Activated CD4-positive, alpha-beta T cell treated with anti-CD3 and anti-CD28 coated beads for 36 hours (primary cell): ENCODE measurements at regions of chr22 and their contacts with region 1.

Region 1: GRCh38 chr22:26502688-26503561 is 9.3 kb downstream of the TFIP11 start:
- DNase-seq: peak; percentile 72
- ATAC-seq: peak; percentile 93
- H3K4me3 Mint-ChIP-seq: no peak overlapping the region
- H3K27ac Mint-ChIP-seq: peak overlapping the region; percentile 84
- H3K4me1 Mint-ChIP-seq: peaks cover 18% of the 10 kb centered on the region
- H3K27me3 Mint-ChIP-seq: no peaks in the 10 kb centered on the region

Region 2: DNA sequence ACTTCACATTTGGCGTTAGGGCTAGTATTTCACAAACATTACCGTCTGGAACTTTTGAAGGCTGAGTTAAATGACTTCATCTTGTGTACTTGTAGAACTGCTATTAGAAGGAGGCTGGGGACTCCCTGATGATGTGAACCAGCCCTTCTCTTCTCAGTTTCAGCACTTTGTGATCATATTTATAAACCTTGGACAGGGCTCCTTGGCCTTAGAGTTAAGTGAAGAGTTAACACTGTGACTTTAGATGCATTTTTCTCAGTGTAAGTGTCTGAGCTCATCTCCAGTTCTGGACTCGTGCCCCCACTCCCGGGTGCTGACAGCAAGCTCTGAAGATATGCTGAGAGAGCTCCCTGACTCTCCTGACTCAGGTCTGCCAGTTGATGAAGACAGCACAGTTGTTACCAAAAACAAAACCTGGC is 162.9 kb after region 1 on chr22:
- CTCF ChIA-PET with region 1: interaction called, 14 read pairs
- POLR2A ChIA-PET with region 1: no interaction called
- intact Hi-C with region 1: loop called in 1 of 2 experiments (anchors 1 kb)
- DNase-seq: no peak
- ATAC-seq: peak; percentile 23
- H3K4me3 Mint-ChIP-seq: no peak overlapping the region
- H3K27ac Mint-ChIP-seq: peak overlapping the region; percentile 71
- H3K4me1 Mint-ChIP-seq: peaks cover 42% of the 10 kb centered on the region
- H3K27me3 Mint-ChIP-seq: no peaks in the 10 kb centered on the region

Region 3: DNA sequence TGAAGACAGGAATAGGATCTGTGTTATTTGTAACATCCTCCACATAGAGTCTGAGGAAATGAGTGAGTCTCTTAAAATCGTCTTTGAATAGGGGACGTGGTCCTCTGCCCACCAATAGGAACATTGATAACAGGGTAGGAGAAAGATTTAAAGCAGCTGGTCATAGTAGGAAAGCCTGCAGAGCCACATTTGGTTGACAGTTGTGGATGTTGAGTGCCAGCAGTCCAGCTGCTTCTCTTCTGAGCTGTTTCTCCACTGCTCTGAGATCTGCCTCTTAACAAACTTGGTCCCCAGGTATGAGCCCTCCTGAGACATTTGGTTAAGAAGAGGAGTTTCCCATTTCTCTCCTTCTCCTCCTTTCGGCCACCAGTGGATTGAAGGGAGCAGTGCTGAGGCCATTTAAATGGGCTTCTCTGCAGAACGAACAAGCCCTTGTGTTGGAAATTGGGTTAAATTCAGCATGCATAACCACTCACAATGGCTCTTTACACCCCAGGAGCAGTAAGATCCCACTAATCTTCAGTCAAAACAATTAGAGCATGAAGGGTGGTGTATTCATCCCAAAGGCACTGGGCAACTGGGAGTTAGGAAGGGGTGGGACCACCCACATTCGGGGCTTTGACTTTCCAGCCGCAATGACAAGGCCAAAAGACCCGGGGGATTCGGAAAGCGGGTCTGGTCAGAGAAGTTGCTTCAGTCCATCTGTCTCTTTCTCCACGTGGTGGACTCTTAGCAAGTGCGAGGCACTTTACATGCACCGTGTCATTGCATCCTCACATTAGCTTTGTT is 186.8 kb after region 1 on chr22:
- CTCF ChIA-PET with region 1: no interaction called
- POLR2A ChIA-PET with region 1: no interaction called
- intact Hi-C with region 1: no loop called
- DNase-seq: no peak
- ATAC-seq: no peak
- H3K4me3 Mint-ChIP-seq: no peak overlapping the region
- H3K27ac Mint-ChIP-seq: no peak overlapping the region
- H3K4me1 Mint-ChIP-seq: peaks cover 38% of the 10 kb centered on the region
- H3K27me3 Mint-ChIP-seq: no peaks in the 10 kb centered on the region

Region 4: DNA sequence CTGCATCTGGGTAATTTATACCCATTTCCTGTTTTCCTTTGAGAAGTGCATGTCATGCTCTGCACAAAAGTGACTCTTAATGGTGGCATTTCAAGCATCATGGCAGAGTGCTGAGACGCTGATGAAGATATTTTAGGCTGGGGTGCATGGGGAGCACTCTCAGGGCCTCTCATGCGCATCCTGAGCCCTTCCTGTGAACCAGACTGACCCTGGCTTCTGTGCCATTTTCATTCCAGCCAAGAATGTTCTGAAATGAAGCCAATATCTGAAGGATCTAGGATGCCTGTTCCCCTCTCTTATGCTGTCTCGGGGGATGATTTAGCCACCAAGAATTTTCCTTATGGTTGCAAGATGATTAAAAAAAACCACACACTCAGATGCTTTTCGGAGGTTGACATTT is 216.0 kb after region 1 on chr22:
- CTCF ChIA-PET with region 1: no interaction called
- POLR2A ChIA-PET with region 1: no interaction called
- intact Hi-C with region 1: no loop called
- DNase-seq: no peak
- ATAC-seq: no peak
- H3K4me3 Mint-ChIP-seq: no peak overlapping the region
- H3K27ac Mint-ChIP-seq: no peak overlapping the region
- H3K4me1 Mint-ChIP-seq: no peaks in the 10 kb centered on the region
- H3K27me3 Mint-ChIP-seq: no peaks in the 10 kb centered on the region